Activated naive CD4-positive, alpha-beta T cell treated with anti-CD3 and anti-CD28 coated beads for 36 hours (primary cell): ENCODE measurements at regions of chr5 and their contacts with region 1.

Region 1: DNA sequence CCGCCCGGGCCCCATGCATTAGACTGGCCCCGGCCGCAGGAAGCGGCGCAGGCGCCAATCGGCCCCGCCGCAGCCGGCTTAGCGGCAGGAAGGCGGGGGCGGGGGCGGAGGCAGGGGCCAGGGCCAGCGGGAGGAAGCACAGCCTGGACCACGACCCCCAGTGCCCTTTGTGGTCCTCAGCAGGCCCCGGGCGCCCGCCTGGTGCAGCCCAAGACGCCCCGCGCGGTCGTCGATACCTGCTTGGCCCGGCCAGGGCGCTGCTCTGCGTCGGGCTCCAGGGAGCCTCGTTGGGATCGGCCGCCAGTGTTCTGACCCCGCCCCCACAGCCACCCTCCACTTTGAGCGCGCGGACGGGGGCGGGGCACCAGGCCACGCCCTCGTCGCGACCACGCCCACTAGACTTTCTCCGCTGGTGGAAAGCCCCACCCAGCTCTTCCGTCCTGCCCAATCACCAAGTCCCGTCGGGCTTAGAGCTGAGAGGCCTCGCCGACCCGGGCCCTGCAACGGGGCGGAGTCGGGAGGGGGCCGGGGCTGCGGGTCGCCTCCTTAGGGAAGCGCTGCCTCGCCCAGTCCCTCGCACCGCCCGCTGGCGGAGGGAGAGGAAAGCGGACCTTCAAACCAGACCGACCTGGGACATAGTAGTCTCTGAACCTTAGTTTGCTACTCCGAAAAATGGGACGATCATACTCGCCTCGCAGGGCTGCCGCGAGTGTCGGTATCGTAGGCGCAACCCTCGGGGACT is at the start of gene PDLIM7:
- DNase-seq: peak; percentile 96
- H3K4me3 Mint-ChIP-seq: peak within 1 kb of the TSS; percentile 84
- H3K27ac Mint-ChIP-seq: no peak within 1 kb of the TSS
- H3K4me1 Mint-ChIP-seq: peaks cover 35% of the 10 kb centered on the region
- H3K27me3 Mint-ChIP-seq: peaks cover 14% of the 10 kb centered on the region
- total RNA-seq, gene PDLIM7: 41.2 to 42.2 TPM

Region 2: GRCh38 chr5:177113566-177114424 is 383.7 kb before region 1 on chr5:
- CTCF ChIA-PET with region 1: interaction called, 3 read pairs
- intact Hi-C with region 1: loop called (anchors 1 kb)
- DNase-seq: peak; percentile 89
- H3K4me3 Mint-ChIP-seq: no peak overlapping the region
- H3K27ac Mint-ChIP-seq: no peak overlapping the region
- H3K4me1 Mint-ChIP-seq: peaks cover 20% of the 10 kb centered on the region
- H3K27me3 Mint-ChIP-seq: no peaks in the 10 kb centered on the region

Region 3: GRCh38 chr5:177311723-177312648 is 185.5 kb before region 1 on chr5 and contains the start of gene MXD3:
- CTCF ChIA-PET with region 1: interaction called, 9 read pairs
- intact Hi-C with region 1: loop called (anchors 1 kb)
- DNase-seq: peak; percentile 99
- H3K4me3 Mint-ChIP-seq: peak within 1 kb of the TSS; percentile 97
- H3K27ac Mint-ChIP-seq: peak within 1 kb of the TSS; percentile 82
- H3K4me1 Mint-ChIP-seq: peaks cover 20% of the 10 kb centered on the region
- H3K27me3 Mint-ChIP-seq: peaks cover 3% of the 10 kb centered on the region
- total RNA-seq, gene MXD3: 45.0 to 51.7 TPM

Region 4: DNA sequence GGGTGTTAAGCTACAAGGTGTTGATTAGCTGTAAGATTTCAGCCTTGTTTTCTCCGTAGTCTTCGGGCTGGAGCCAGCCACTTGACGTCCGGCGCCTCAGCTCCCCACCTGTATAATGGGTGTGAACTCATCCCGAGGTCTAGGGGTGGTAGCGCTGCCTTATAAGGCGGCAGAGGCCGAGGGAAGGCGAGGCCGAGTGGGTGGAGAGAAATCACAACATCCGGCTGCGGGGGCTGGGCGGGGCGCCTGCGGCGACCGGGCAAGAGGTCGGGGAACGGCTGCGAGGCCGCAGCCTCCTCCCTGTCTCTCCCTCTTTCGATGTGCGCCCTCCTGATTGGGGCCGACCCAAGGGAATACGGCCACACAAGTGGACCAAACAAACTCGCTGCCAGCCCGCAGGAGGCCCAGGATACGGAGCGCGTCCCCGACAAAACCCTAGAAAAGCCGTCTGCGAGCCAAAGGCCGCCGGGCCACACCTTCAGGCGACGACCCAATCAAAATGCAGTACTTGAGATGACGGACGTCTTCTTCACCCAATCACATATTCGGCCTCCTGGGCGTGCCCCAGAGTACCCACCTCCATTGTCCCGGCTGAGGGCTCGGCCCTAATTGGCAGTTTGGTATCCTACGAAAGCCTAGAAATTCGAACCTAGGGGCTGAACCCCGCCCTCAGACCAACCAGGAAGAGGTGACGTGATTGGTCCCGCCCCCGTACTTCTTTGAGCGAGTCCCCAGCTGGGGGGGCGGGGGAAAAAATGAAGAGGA is 71.5 kb before region 1 on chr5:
- CTCF ChIA-PET with region 1: no interaction called
- intact Hi-C with region 1: loop called (anchors 1 kb)
- DNase-seq: peak; percentile 100
- H3K4me3 Mint-ChIP-seq: peak overlapping the region; percentile 88
- H3K27ac Mint-ChIP-seq: peak overlapping the region; percentile 95
- H3K4me1 Mint-ChIP-seq: peaks cover 33% of the 10 kb centered on the region
- H3K27me3 Mint-ChIP-seq: no peaks in the 10 kb centered on the region

Region 5: GRCh38 chr5:177462021-177462670 is 35.3 kb before region 1 on chr5:
- CTCF ChIA-PET with region 1: interaction called, 27 read pairs
- intact Hi-C with region 1: no loop called
- DNase-seq: no peak
- H3K4me3 Mint-ChIP-seq: peak overlapping the region; percentile 24
- H3K27ac Mint-ChIP-seq: no peak overlapping the region
- H3K4me1 Mint-ChIP-seq: peaks cover 16% of the 10 kb centered on the region
- H3K27me3 Mint-ChIP-seq: no peaks in the 10 kb centered on the region

Region 6: DNA sequence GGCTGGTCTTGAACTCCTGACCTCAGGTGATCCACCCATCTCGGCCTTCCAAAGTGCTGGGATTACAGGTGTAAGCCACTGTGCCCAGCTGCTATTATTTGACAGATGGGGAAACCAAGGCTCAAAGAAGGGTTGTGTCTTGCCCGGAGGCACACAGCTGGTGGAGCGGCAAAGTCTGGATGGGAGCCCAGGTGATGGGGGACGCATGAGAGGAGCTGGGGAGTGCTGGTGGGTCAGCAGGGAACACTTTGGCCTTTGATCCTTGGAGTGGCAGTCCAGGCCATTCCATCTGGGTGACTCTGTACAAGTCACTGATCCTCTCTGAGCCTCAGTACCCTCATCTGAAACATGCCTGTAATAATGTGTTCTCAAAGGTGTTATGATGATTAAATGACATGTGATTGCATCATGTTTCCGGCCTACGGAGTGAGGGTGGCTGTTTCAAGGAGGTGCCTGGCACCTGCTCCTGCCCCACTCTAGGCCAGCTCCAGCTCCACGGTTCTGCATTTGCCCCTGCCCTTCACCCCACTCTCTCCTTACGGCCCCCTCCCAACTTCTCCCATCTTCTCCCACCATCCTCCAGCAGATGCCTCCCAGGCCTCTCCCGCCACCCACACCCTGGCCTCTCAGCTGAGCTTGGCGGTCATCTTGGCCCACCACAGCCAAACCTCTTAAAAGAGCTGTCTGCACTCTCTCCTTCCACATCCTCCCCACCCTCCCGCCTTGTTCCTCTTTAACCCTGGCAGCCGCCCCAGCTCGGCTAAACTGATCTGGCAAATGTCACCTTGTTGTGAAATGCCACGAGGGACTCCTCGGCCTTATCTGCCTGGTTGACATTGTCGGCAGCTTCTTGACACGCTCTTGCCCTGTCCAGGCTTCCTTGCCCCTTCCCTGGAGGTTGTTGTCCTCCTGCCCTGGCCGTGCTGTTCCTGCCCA is 18.5 kb before region 1 on chr5:
- CTCF ChIA-PET with region 1: interaction called, 6 read pairs
- intact Hi-C with region 1: loop called (anchors 1 kb)
- DNase-seq: peak; percentile 73
- H3K4me3 Mint-ChIP-seq: no peak overlapping the region
- H3K27ac Mint-ChIP-seq: peak overlapping the region; percentile 94
- H3K4me1 Mint-ChIP-seq: peaks cover 51% of the 10 kb centered on the region
- H3K27me3 Mint-ChIP-seq: peaks cover under 1% of the 10 kb centered on the region

Region 7: GRCh38 chr5:177554474-177555111 is 57.1 kb after region 1 on chr5 and contains the start of gene FAM193B:
- CTCF ChIA-PET with region 1: interaction called, 8 read pairs
- intact Hi-C with region 1: loop called (anchors 1 kb)
- DNase-seq: peak; percentile 97
- H3K4me3 Mint-ChIP-seq: peak within 1 kb of the TSS; percentile 80
- H3K27ac Mint-ChIP-seq: peak within 1 kb of the TSS; percentile 66
- H3K4me1 Mint-ChIP-seq: peaks cover 24% of the 10 kb centered on the region
- H3K27me3 Mint-ChIP-seq: no peaks in the 10 kb centered on the region
- total RNA-seq, gene FAM193B: 87.4 to 87.8 TPM